Activated naive CD4-positive, alpha-beta T cell treated with anti-CD3 and anti-CD28 coated beads for 36 hours (primary cell): ENCODE measurements at regions of chr13 and their contacts with region 1.

Region 1: GRCh38 chr13:43905435-43906031 is 25.8 kb downstream of the LACC1 start:
- DNase-seq: peak; percentile 44
- H3K4me3 Mint-ChIP-seq: no peak overlapping the region
- H3K27ac Mint-ChIP-seq: no peak overlapping the region
- H3K4me1 Mint-ChIP-seq: peaks cover 7% of the 10 kb centered on the region
- H3K27me3 Mint-ChIP-seq: peaks cover 16% of the 10 kb centered on the region

Region 2: DNA sequence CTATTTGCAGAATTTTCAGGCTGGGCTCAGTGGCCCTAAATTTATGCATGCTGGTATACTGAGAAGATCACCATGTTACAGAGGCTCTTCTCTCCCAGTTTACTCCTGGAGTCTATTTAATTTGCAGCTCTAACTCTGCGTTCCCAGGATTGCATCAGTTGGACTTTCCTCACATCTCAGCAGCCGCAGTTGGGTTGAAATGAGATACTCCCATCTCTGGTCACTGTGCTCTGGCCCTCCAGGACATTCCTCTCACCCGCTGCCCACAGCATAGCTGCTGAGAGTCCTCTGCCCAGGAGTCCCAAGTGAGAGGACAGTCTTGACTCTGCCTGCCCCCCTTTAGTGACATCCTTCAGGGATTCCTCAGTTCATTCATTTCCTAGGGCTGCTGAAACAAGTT is 125.1 kb after region 1 on chr13:
- CTCF ChIA-PET with region 1: no interaction called
- intact Hi-C with region 1: no loop called
- DNase-seq: no peak
- H3K4me3 Mint-ChIP-seq: no peak overlapping the region
- H3K27ac Mint-ChIP-seq: no peak overlapping the region
- H3K4me1 Mint-ChIP-seq: no peaks in the 10 kb centered on the region
- H3K27me3 Mint-ChIP-seq: peaks cover 10% of the 10 kb centered on the region

Region 3: DNA sequence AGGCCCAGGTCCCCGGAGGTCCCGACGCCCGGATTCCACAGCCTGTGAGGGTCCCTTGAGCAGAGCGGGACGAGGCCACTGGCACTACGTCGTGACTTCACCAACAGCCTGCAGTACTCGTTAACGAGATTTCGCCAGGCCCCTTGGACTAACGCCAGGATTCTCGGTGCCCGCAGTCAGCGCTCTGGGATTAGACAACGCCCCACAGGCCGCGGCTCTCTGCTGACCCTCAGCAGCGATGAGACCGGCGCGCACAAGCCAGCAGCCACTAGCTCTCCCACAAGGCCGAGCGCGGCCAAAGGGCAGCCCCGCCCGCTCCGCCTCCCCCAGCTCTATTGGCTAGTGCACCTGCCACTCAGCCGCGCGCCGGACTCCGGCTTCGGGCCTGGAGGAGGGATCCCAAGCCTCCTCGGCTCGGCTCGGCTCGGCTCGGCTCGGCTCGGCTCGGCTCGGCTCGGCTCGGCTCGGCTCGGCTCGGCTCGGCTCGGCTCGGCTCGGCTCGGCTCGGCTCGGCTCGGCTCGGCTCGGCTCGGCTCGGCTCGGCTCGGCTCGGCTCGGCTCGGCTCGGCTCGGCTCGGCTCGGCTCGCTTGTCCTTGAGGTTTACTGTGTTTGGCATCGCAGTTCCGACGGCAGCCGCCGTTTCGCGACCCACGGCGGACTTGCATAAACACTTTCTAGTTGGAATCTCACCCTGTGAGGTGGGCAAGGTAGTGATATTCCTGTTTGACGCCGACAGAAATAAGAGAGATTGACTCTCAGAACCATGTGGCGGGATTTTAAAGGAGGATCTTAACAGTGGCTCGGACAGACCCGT is 236.4 kb after region 1 on chr13:
- CTCF ChIA-PET with region 1: no interaction called
- intact Hi-C with region 1: loop called (anchors 1 kb)
- DNase-seq: peak; percentile 95
- H3K4me3 Mint-ChIP-seq: peak overlapping the region; percentile 89
- H3K27ac Mint-ChIP-seq: peak overlapping the region; percentile 86
- H3K4me1 Mint-ChIP-seq: peaks cover 14% of the 10 kb centered on the region
- H3K27me3 Mint-ChIP-seq: no peaks in the 10 kb centered on the region

Region 4: DNA sequence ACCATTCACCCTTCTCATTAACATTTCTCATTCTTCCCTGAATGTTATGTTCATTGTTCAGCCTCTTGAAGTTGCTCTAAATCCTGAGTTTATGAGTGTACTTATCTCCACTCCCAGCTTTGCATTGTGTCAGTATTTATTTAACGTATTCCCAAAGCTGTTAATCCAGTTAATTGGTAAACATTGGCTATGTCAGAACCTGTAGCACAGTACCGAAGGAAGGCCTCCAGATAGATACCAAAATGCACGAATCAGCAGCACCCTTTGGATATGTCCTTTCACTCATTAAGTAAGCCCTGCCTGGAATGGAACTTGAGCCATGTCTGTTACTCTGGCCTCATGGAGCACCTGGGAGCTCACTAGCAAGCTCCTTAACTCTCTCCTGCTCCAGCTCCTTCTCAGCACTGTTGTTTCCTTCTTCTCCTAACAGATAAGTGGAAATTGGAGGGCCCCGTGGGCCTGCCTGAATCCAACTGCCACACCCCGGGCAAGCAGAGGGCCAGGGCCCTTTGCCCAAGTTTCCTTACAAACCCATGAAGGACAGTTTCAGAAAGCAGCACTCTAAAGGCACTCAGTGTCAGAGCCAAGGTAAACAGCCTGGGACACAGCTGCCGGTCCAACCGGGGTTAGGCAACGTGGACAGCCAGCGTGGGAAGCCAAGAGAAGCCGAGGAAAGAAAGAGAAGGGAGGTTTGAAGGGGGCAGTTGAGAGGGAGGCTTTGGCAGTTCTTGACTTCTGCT is 313.1 kb after region 1 on chr13:
- CTCF ChIA-PET with region 1: no interaction called
- intact Hi-C with region 1: no loop called
- DNase-seq: no peak
- H3K4me3 Mint-ChIP-seq: no peak overlapping the region
- H3K27ac Mint-ChIP-seq: no peak overlapping the region
- H3K4me1 Mint-ChIP-seq: no peaks in the 10 kb centered on the region
- H3K27me3 Mint-ChIP-seq: no peaks in the 10 kb centered on the region

Region 5: DNA sequence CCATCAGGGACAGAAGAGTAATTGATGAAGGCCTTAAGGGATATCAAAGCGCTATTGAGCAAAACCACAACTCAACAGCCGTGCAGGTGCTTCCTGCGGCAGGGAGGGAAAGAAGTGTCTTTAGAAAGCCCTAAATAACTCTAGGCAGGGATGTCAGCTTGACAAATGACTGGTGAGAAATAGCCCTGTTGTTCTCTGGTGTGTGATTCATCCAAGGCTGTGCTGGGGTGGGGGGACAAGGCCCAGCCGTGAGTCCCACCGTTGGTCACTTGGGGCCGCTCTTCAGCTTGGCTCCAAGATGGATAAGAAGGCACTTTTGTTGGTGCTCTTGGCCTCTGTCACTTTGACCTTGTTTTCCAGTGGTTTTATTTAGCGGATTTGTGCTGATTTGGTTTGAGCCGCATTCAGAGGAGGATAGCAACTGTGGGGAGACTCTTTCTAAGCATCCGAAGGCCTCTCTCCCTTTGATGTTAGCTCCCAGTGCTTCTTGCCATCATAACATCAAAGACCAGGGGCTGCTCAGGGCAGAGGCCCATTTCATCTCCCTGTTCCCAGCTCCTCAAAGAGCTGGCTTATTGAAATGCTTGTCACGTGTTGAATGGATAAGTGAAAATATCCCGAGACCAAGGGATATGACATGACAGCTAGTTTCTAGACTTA is 337.8 kb after region 1 on chr13:
- CTCF ChIA-PET with region 1: no interaction called
- intact Hi-C with region 1: loop called (anchors 1 kb)
- DNase-seq: peak; percentile 69
- H3K4me3 Mint-ChIP-seq: no peak overlapping the region
- H3K27ac Mint-ChIP-seq: no peak overlapping the region
- H3K4me1 Mint-ChIP-seq: peaks cover 10% of the 10 kb centered on the region
- H3K27me3 Mint-ChIP-seq: peaks cover 4% of the 10 kb centered on the region

Region 6: DNA sequence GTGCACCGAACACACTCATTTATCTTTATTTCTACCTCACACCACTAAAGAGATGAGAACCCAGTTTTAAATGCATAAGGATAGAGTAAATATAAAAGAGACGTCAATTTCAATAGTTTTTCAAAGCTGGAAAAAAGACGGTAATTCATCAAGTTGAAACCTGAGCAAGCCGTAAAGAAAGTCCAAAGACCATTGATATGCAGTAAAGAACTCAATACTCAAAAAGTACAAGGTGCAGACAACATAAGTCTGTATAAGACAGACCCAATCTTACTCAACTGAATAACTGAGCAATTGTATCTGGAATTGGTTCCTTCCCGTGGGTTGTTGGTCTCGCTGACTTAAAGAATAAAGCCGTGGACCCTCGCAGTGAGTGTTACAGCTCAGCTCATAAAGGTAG is 550.2 kb after region 1 on chr13:
- CTCF ChIA-PET with region 1: interaction called, 11 read pairs
- intact Hi-C with region 1: no loop called
- DNase-seq: no peak
- H3K4me3 Mint-ChIP-seq: no peak overlapping the region
- H3K27ac Mint-ChIP-seq: no peak overlapping the region
- H3K4me1 Mint-ChIP-seq: peaks cover 4% of the 10 kb centered on the region
- H3K27me3 Mint-ChIP-seq: no peaks in the 10 kb centered on the region

Region 7: DNA sequence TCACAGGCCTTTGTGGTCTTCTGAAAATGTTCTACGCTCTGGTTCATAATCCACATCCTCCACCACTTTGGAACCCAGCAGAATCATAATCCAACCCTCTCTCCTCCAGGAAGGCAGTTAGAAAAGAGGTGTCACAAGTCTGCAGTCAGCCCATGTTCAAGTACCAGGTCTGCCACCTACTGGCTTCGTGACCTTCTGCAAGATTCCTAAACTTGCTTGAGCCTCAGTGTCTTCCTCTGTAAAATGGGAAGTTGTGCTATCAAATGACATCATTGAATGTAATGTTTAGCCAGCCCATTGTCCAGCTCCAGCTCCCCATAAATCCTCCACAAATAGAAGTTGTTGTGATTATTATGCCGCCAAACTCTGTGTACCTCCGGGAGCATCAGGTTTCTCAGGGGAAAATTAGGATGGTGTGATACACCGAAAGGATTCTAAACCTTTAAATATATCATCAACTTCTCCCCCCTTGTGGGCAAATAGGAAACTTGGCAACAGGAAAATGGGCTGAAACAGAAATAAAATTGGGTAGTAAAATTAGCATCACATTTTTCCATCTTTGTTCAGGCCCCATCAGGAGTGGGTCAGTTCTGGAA is 974.0 kb after region 1 on chr13:
- CTCF ChIA-PET with region 1: no interaction called
- intact Hi-C with region 1: loop called (anchors 5 kb)
- DNase-seq: peak; percentile 49
- H3K4me3 Mint-ChIP-seq: no peak overlapping the region
- H3K27ac Mint-ChIP-seq: no peak overlapping the region
- H3K4me1 Mint-ChIP-seq: no peaks in the 10 kb centered on the region
- H3K27me3 Mint-ChIP-seq: peaks cover 3% of the 10 kb centered on the region